Activated CD4-positive, alpha-beta T cell treated with anti-CD3 and anti-CD28 coated beads, Interleukin-2, amount 10 ng/mL, durations not matched to agents 7 days and 5 days (primary cell): ENCODE measurements at regions of chr11 and their contacts with region 1.

Region 1: GRCh38 chr11:118139578-118139977 is 13.0 kb downstream of the SCN4B start:
- DNase-seq: no peak
- H3K4me3 Mint-ChIP-seq: no peak overlapping the region
- H3K27ac Mint-ChIP-seq: no peak overlapping the region
- H3K4me1 Mint-ChIP-seq: peaks cover 8% of the 10 kb centered on the region
- H3K27me3 Mint-ChIP-seq: peaks cover 52% of the 10 kb centered on the region

Region 2: DNA sequence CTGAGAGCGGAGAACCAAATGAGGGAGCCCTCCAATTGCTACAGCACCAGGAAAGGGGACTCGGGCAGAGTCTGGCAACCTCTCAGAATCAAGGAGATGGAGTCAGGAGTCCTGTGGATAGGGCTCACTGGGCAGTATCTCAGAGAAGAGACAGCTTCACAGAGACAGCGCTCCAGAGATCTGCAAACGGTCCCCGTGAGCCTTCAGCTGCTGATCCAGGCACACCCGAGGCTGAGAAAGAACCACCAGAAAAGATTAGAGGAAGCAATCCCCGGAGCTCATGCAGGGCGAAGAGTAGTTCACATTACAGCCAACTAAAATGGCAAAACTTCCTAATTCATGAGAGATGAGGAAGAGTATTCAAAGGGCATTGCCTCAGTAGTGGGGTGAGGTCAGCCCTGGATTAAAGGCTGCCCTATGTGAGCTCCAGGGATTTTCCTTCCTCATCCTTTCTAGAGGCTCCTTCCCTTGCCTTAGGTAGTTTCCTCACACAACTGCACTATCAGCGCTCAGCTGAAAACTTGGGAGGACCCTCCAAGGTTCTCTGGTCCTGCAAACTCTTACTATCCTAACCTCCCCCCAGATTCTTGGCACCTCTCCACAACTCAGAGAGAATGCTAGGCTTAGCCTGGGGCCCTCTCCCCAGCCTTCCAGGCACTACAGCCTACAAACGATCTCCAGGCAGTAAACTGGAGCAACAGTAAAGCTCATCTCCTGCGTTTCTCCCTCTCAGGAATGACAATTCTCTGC is 10.7 kb before region 1 on chr11:
- CTCF ChIA-PET with region 1: interaction called, 13 read pairs
- POLR2A ChIA-PET with region 1: no interaction called
- DNase-seq: no peak
- H3K4me3 Mint-ChIP-seq: no peak overlapping the region
- H3K27ac Mint-ChIP-seq: no peak overlapping the region
- H3K4me1 Mint-ChIP-seq: no peaks in the 10 kb centered on the region
- H3K27me3 Mint-ChIP-seq: peaks cover 9% of the 10 kb centered on the region

Region 3: DNA sequence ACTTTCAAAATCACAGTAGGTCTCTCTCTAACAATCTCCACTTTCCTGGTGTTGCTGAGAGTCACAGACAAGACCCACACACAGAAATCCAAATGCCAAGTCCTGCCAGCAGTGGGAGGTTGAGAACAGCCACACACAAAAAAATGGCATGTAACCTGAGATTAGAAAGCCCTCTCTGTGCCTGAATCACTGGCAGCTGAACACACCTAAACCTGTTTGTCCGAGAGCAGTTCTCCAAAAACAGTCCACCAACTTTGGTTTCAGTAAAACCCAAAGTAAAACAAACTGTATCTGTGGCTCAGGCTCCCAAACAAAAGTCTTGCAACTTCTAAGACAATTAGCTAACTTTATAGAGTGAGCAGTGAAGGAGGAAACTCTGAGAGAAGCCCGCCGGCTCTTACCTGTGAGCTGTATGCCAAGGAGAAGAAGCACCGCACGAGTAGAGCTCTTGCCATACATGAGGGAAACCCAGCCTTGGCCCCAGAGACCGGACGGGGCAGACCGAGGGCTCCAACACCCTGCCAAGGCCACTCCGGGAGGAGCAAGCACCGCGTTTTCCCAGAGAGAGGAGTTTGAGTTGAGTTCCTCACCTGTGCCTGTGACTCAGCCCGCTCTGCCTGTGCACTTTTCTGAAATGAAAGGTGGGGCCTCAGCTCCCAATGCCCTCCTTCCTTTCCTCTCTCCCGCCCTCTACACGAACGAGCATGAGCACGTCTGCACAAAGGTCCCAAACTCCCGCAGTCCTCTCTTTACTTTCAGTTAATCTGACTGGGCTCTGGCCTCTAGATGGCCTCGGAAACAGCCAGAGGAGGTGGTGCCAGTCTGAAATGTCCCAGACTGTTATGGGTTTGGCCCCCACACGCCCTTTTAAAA is 124.4 kb after region 1 on chr11 and contains the start of gene MPZL2:
- CTCF ChIA-PET with region 1: no interaction called
- POLR2A ChIA-PET with region 1: no interaction called
- DNase-seq: peak; percentile 37
- H3K4me3 Mint-ChIP-seq: peak within 1 kb of the TSS; percentile 74
- H3K27ac Mint-ChIP-seq: peak within 1 kb of the TSS; percentile 77
- H3K4me1 Mint-ChIP-seq: peaks cover 55% of the 10 kb centered on the region
- H3K27me3 Mint-ChIP-seq: peaks cover 10% of the 10 kb centered on the region
- total RNA-seq, gene MPZL2: 5.5 to 6.0 TPM